ENCODE measurements at regions of chr21 and their contacts with region 1.

Region 1: DNA sequence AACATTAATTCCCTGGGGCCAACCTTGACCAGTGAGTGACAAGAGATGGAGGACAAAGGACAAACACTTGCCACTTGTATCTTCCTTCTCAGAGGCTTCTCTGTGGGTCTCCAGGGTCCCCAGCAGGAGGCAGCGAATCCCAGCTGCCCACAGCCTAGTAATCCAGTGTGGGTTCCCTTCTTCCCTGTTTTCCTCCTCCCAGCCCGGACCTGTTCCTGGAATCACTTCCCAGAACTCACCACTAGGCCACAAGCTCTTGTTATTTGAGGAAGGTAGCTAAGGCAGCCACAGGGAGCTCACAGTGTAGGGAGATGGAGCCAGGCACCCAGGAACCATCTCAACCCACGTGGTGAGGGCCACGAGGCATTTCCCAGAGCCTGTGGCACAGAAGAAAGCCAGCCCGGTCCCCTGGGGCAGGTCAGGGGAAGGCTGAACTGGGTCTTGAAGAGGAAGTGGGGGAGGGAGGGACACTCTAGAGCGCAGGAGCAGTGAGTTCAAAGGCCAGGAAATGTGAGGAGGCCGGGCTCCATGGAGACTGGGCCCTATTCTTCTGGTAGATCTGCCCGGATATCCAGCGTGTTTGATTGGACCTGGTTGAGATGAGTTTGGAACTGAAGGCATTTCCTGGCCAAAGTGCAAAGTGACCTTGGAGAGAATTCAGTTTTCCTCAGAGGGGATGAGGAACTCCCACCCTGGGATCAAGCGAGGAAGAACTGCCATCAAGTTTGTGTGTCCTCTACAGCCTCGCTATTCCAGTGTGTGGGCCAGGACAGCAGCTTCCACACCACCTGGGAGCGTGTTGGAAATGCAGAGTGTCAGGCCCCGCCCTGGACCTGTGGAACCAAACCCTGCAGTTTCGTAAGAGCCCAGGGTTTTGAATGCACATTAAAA is 20.3 kb upstream of the C2CD2 start:
- DNase-seq: peak; percentile 50
- ATAC-seq: peak; percentile 84
- H3K4me3 ChIP-seq: peak overlapping the region in 2 of 3 experiments; percentile 10 to 56; a peak in 2 of 6 replicates
- H3K27ac ChIP-seq: no peak overlapping the region
- H3K4me1 ChIP-seq: peaks cover 45% of the 10 kb centered on the region
- H3K27me3 ChIP-seq: no peaks in the 10 kb centered on the region
- CTCF ChIP-seq: peak; percentile 26
- EP300 ChIP-seq: no peak; a peak in 1 of 4 replicates
- POLR2A ChIP-seq: 0 out of 4 replicates have a peak, but pooled peaks of 1 of the 2 experiments have one; percentile 39
- RAD21 ChIP-seq: no peak

Region 2: DNA sequence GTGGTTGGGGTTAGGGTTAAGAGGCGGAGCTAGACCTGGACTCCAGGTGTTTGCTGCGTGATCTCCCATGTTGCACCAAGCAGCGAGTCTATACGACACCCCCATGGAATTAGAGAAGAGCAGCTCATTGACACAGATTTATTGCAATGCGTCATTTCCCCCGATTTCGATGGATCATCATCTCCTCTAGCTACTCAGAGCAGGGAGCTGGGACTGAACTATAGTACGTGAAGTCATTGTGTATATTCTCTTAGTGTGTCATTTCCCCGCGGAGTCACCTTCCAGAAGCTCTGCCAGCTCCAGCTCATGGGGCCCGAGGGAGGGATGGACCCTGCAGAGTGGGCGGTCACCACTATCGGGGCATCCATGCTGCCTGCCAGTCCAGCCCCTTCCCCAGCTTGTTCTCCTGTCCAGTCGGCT is 12.8 kb before region 1 on chr21:
- CTCF ChIA-PET with region 1: no interaction called
- POLR2A ChIA-PET with region 1: interaction called, 8 read pairs
- in situ Hi-C with region 1: no loop called
- intact Hi-C with region 1: loop called (anchors 2 kb)
- DNase-seq: no peak
- ATAC-seq: no peak
- H3K4me3 ChIP-seq: peak overlapping the region in 1 of 3 experiments; percentile 5; a peak in 1 of 6 replicates
- H3K27ac ChIP-seq: no peak overlapping the region
- H3K4me1 ChIP-seq: peaks cover 67% of the 10 kb centered on the region
- H3K27me3 ChIP-seq: peaks cover 2 to 32% of the 10 kb centered on the region in 2 experiments; a peak in 4 of 5 replicates
- CTCF ChIP-seq: no peak
- EP300 ChIP-seq: no peak
- POLR2A ChIP-seq: no peak
- RAD21 ChIP-seq: no peak

Measured in HepG2 (cell line).